CD4-positive, alpha-beta memory T cell (primary cell): ENCODE measurements at regions of chr16 and their contacts with region 1.

Region 1: DNA sequence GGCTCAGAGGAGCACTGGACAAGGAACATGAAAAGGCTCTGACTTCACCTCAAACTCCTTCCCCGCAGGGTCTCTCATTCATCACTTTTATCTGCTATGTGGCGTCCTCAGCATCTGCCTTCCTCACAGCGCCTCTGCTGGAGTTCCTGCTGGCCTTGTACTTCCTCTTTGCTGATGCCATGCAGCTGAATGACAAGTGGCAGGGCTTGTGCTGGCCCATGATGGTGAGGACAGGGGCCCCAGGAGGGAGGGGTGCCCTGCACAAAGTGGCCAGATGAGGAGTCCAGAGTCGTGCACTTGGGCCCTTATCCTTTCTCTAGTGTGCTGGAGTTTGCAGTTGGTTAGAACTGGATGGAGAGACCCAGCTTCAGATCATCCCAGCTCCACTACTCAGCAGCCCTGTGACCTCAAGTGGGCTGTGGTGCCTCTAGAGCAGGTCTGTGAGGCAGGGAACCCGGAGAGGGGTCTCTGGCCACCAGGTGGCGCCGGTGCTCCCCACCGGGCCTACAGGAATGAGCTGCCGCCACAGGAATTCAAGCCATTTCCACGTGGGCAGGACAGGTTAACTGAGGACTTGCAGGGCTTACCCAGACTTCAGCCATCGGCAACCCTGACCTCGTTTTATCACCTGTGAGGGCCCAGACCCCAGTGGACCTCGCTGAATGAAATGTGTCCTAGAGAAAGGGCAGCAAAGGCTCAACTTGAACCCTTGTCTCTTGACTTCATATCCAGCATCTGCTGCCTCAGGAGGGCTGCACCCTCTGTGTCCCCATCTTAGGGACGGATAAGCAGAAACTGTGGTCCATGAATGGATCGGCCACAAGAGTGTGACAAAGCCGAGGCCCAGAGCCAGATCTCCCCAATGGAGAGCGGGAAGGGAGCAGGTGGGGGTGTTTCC is 4.0 kb downstream of the CMTM3 start:
- DNase-seq: peak; percentile 76 to 80 (median 76)
- H3K4me3 ChIP-seq: no peak overlapping the region
- H3K4me3 Mint-ChIP-seq: peak overlapping the region in 5 of 8 donors; percentile 36 to 77 (median 36)
- H3K27ac ChIP-seq: peak overlapping the region; percentile 48
- H3K27ac Mint-ChIP-seq: peak overlapping the region; percentile 10 to 83 (median 61)
- H3K4me1 ChIP-seq: peaks cover 42% of the 10 kb centered on the region
- H3K4me1 Mint-ChIP-seq: peaks cover 14 to 41% (median 29%) of the 10 kb centered on the region in 4 donors
- H3K27me3 ChIP-seq: no peaks in the 10 kb centered on the region
- H3K27me3 Mint-ChIP-seq: peaks cover 0 to 4% of the 10 kb centered on the region in 2 donors

Region 2: DNA sequence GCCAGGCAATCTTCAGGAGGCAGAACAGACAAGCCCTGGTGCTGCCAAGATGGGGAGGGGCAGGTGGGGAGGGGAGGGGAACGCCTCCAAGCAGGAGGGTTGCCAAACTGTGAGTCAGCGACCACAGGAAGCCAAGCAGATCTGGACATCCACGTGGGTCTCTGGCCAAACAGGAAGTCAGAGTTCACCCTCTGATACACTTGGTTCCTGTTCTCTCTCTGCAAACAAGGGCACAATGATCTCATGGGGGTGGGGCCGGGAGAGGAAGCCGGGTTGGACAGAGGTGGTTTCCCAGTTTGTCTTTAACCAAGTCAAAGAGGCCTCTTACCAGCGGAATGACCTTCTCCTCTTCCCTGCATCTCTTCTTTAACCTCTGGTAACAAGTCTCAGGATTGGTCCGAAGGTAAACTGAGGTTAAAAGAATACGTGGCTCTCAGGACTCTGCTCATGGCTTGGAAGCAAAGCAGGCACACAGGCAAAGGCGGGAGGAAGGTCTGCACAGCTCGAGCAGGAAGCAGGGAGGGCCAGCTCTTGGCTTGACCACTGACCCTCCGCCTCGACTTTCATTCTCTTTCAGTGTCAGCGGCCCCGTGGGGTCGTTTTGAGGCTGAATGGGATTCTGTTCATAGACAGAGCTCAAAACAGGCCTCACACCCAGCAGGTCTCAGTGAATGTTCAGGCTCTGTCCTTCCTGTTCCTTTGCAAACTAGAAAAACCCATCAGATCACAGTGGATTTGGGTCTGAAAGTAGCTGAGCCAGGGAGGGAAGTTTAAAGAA is 91.5 kb before region 1 on chr16:
- CTCF ChIA-PET with region 1: interaction called, 13 read pairs
- POLR2A ChIA-PET with region 1: interaction called, 49 read pairs
- intact Hi-C with region 1: loop called (anchors 2 kb)
- DNase-seq: peak; percentile 63 to 96 (median 67)
- H3K4me3 ChIP-seq: no peak overlapping the region
- H3K4me3 Mint-ChIP-seq: peak overlapping the region in 7 of 8 donors; percentile 66 to 83 (median 74)
- H3K27ac ChIP-seq: peak overlapping the region; percentile 76
- H3K27ac Mint-ChIP-seq: peak overlapping the region; percentile 96 to 99 (median 98)
- H3K4me1 ChIP-seq: peaks cover 73% of the 10 kb centered on the region
- H3K4me1 Mint-ChIP-seq: peaks cover 52 to 94% (median 71%) of the 10 kb centered on the region in 4 donors
- H3K27me3 ChIP-seq: no peaks in the 10 kb centered on the region
- H3K27me3 Mint-ChIP-seq: no peaks in the 10 kb centered on the region

Region 3: DNA sequence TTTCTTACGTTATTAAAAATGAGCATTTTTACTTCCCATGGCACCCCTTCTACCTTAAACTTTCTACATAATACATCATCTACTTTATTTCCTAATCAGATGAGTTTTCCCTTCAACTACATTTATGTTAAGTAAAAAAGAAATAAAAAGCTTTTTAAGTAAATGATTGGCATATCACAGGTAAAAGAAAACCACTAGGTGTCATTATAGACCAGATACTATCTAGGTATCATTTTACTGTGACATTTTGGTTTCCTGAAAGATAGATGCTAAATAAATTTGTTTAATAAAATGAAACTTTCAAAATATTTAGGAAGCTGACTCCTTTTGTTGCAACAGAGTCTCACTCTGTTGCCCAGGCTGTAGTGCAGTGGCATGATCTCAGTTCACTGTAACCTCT is 46.1 kb before region 1 on chr16:
- CTCF ChIA-PET with region 1: interaction called, 51 read pairs
- POLR2A ChIA-PET with region 1: interaction called, 101 read pairs
- intact Hi-C with region 1: loop called (anchors 2 kb)
- DNase-seq: peak in 3 of 5 donors; percentile 28 to 42 (median 31)
- H3K4me3 ChIP-seq: no peak overlapping the region
- H3K4me3 Mint-ChIP-seq: peak overlapping the region in 6 of 8 donors; percentile 15 to 86 (median 64)
- H3K27ac ChIP-seq: no peak overlapping the region
- H3K27ac Mint-ChIP-seq: peak overlapping the region; percentile 58 to 80 (median 73)
- H3K4me1 ChIP-seq: peaks cover 73% of the 10 kb centered on the region
- H3K4me1 Mint-ChIP-seq: peaks cover 53 to 74% (median 63%) of the 10 kb centered on the region in 4 donors
- H3K27me3 ChIP-seq: no peaks in the 10 kb centered on the region
- H3K27me3 Mint-ChIP-seq: no peaks in the 10 kb centered on the region

Region 4: DNA sequence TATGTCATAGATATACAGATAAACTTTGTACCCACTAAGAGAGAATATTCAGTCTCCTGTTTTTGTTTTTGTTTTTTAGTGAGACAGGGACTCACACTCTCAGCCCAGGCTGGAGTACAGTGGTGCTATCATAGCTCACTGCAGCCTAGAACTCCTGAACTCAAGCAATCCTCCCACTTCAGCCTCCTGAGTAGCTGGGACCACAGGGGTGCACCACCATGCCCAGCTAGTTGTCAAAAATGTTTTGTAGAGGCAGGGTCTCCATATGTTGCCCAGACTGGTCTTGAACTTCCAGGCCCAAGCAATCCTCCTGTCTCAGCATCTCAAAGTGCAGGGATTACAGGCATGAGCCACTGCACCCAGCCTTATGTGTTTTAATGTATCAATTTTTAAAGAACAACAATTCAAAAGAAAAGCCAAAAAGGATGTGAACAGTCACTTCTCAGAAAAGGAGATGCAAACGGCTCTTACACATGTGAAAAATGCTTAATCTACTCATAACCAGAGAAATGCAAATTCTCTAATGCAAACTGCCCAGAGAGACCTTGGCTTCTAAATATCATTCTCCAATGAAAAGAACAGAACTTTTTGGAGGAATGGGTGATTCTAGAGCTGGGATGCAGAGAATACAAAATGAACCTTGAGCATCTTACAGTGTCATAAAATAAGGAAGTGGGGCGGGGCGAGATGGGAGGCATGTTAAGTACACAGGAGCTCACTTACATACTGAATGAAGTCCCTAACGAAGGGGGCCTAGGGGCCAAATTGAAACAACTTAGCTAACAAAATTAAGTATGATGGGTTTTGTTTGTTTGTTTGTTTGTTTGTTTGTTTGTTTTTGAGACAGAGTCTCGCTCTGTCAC is 11.3 kb before region 1 on chr16:
- CTCF ChIA-PET with region 1: interaction called, 35 read pairs
- POLR2A ChIA-PET with region 1: interaction called, 8 read pairs
- intact Hi-C with region 1: no loop called
- DNase-seq: no peak
- H3K4me3 ChIP-seq: no peak overlapping the region
- H3K4me3 Mint-ChIP-seq: peak overlapping the region in 3 of 8 donors; percentile 31 to 72 (median 43)
- H3K27ac ChIP-seq: no peak overlapping the region
- H3K27ac Mint-ChIP-seq: peak overlapping the region; percentile 23 to 81 (median 58)
- H3K4me1 ChIP-seq: peaks cover 26% of the 10 kb centered on the region
- H3K4me1 Mint-ChIP-seq: peaks cover 15 to 30% (median 20%) of the 10 kb centered on the region in 4 donors
- H3K27me3 ChIP-seq: no peaks in the 10 kb centered on the region
- H3K27me3 Mint-ChIP-seq: no peaks in the 10 kb centered on the region

Region 5: GRCh38 chr16:66696669-66697630 is 88.5 kb after region 1 on chr16 and contains the start of gene CMTM4:
- CTCF ChIA-PET with region 1: interaction called, 6 read pairs
- POLR2A ChIA-PET with region 1: no interaction called
- intact Hi-C with region 1: loop called (anchors 5 kb)
- DNase-seq: peak; percentile 68 to 80 (median 72)
- H3K4me3 ChIP-seq: peak within 1 kb of the TSS in 1 of 2 donors; percentile 57
- H3K4me3 Mint-ChIP-seq: peak within 1 kb of the TSS; percentile 78 to 87 (median 85)
- H3K27ac ChIP-seq: peak within 1 kb of the TSS; percentile 27
- H3K27ac Mint-ChIP-seq: peak within 1 kb of the TSS in 5 of 7 donors; percentile 23 to 78 (median 66)
- H3K4me1 ChIP-seq: peaks cover 8% of the 10 kb centered on the region
- H3K4me1 Mint-ChIP-seq: peaks cover 5 to 20% (median 12%) of the 10 kb centered on the region in 4 donors
- H3K27me3 ChIP-seq: no peaks in the 10 kb centered on the region
- H3K27me3 Mint-ChIP-seq: peaks cover 0 to 5% of the 10 kb centered on the region in 2 donors
- total RNA-seq, gene CMTM4: 2.0 to 2.2 TPM

Region 6: GRCh38 chr16:66872943-66873684 is 264.6 kb after region 1 on chr16:
- CTCF ChIA-PET with region 1: interaction called, 5 read pairs
- POLR2A ChIA-PET with region 1: interaction called, 4 read pairs
- intact Hi-C with region 1: loop called (anchors 1 kb)
- DNase-seq: peak; percentile 80 to 94 (median 82)
- H3K4me3 ChIP-seq: peak overlapping the region in 1 of 2 donors; percentile 52
- H3K4me3 Mint-ChIP-seq: peak overlapping the region; percentile 61 to 90 (median 82)
- H3K27ac ChIP-seq: peak overlapping the region; percentile 36
- H3K27ac Mint-ChIP-seq: peak overlapping the region; percentile 75 to 95 (median 86)
- H3K4me1 ChIP-seq: peaks cover 22% of the 10 kb centered on the region
- H3K4me1 Mint-ChIP-seq: peaks cover 18 to 37% (median 23%) of the 10 kb centered on the region in 4 donors
- H3K27me3 ChIP-seq: no peaks in the 10 kb centered on the region
- H3K27me3 Mint-ChIP-seq: no peaks in the 10 kb centered on the region